Aorta (tissue), 5 donors: ENCODE measurements at regions of chr14 and their contacts with region 1.

Region 1: DNA sequence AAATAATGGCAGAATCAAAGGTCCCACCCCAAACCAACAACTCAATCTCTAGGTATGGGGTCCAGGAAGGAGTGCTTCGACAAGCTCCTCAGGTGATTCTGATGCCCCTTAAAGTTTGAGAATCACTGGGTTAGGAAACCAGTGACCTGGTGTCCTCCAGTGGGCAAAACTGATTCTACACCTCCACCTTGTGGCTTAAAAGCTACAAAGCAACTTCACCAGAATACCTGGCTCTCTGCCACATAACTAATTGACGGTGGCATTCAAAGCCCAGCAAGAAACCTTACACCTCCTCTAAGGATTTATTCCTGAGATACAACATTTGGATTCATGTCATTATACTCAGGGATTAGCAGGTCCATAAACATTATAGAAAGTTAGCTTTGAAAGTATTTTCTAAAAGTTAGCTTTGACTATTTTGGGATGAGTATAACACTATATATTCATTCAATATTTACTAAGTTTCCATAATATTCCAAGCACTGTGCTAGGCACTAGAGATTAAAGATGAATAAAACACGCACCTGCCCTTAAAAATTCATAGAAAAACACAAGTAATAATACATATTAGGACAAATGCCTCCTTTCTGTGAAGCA is 45.4 kb downstream of the DCAF5 start:
- DNase-seq: no peak
- ATAC-seq: peak; percentile 64
- H3K4me3 ChIP-seq: no peak overlapping the region
- H3K27ac ChIP-seq: no peak overlapping the region
- H3K4me1 ChIP-seq: no peaks in the 10 kb centered on the region
- H3K27me3 ChIP-seq: no peaks in the 10 kb centered on the region

Region 2: GRCh38 chr14:68862954-68863594 is 244.4 kb before region 1 on chr14:
- intact Hi-C with region 1: loop called (anchors 5 kb)
- DNase-seq: peak; percentile 87 to 90
- ATAC-seq: peak; percentile 73
- H3K4me3 ChIP-seq: no peak overlapping the region
- H3K27ac ChIP-seq: no peak overlapping the region
- H3K4me1 ChIP-seq: no peaks in the 10 kb centered on the region
- H3K27me3 ChIP-seq: no peaks in the 10 kb centered on the region

Region 3: GRCh38 chr14:68911594-68912227 is 195.8 kb before region 1 on chr14:
- intact Hi-C with region 1: loop called (anchors 5 kb)
- DNase-seq: peak; percentile 69 to 87
- ATAC-seq: peak; percentile 90
- H3K4me3 ChIP-seq: no peak overlapping the region
- H3K27ac ChIP-seq: peak overlapping the region in 1 of 2 donors; percentile 74
- H3K4me1 ChIP-seq: peaks cover 0 to 3% of the 10 kb centered on the region in 2 donors
- H3K27me3 ChIP-seq: no peaks in the 10 kb centered on the region

Region 4: DNA sequence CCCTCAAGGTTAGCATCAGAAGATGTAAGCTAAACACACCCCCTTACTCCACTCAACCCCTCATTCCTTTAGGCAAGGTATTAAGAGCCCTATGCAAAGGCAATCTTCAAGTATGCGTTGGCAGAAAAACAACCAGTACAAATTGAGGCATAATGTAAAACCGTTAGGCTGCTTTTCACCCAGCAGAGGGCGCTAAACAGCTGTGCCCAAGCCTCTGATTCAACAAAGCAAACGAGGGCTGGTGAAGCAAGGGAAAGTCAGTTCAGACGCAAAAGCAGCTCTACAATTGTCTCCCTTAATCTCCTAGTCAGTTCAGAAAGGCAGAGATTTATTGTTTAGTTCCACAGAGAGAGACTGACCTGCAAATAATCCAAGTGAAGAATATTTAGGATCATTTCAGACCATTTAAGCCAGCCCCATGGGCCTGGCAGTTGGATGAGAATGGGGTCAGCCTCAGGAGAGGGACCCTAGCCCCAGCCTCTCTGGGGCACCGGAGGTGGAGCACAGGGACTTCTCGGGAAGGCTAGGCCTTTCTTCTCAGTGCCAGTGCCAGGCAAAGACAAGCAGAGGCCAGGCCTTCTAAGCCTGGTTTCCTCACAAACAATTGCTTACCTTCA is 21.9 kb after region 1 on chr14:
- intact Hi-C with region 1: no loop called
- DNase-seq: peak; percentile 79 to 81
- ATAC-seq: peak; percentile 88
- H3K4me3 ChIP-seq: no peak overlapping the region
- H3K27ac ChIP-seq: no peak overlapping the region
- H3K4me1 ChIP-seq: peaks cover 0 to 14% of the 10 kb centered on the region in 2 donors
- H3K27me3 ChIP-seq: no peaks in the 10 kb centered on the region

Region 5: GRCh38 chr14:69183735-69184134 is 76.2 kb after region 1 on chr14:
- intact Hi-C with region 1: no loop called
- DNase-seq: no peak
- ATAC-seq: no peak
- H3K4me3 ChIP-seq: no peak overlapping the region
- H3K27ac ChIP-seq: no peak overlapping the region
- H3K4me1 ChIP-seq: no peaks in the 10 kb centered on the region
- H3K27me3 ChIP-seq: no peaks in the 10 kb centered on the region